ENCODE measurements at regions of chr17 and their contacts with region 1.

Region 1: DNA sequence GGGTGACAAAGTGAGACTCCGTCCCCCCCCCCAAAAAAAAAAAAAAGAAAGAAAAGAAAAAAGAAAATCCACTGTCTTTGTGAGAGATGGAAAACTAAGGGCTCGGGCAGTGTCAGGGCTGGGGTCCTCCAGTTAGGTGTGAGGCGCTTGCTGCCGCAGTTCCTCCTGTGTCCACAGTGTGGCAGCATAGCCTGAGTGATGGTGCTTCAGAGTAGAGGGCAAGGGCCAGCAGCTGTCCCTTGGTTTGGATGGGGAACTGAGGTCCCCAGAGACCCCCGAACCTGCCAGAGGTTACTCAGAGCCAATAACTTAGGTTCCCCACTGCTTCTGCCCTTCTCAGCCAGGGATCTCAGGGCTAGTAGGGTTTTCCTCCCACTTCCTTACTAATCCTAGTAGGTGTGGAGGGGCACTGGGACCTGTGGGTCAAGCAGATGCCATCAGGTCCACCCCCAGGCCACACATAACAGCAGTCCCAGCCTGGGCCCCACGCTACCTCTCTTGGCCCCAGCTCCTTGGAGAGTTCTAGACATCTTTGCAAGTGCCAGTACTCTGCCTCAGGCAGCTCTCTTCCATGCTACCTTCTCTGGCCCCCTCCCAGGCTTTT is 7.9 kb upstream of the LLGL1 start:
- DNase-seq: peak in 1 of 2 experiments; percentile 96
- H3K4me3 ChIP-seq: no peak overlapping the region
- H3K27ac ChIP-seq: no peak overlapping the region
- H3K4me1 ChIP-seq: no peaks in the 10 kb centered on the region; a peak in 3 of 7 replicates
- H3K27me3 ChIP-seq: no peaks in the 10 kb centered on the region
- CTCF ChIP-seq: peak; percentile 92 to 99 (median 98)
- EP300 ChIP-seq: no peak
- POLR2A ChIP-seq: no peak
- RAD21 ChIP-seq: peak; percentile 94 to 95

Region 2: GRCh38 chr17:18161207-18162145 is 56.0 kb before region 1 on chr17:
- CTCF ChIA-PET with region 1: no interaction called
- POLR2A ChIA-PET with region 1: no interaction called
- DNase-seq: no peak
- H3K4me3 ChIP-seq: no peak overlapping the region
- H3K27ac ChIP-seq: no peak overlapping the region
- H3K4me1 ChIP-seq: peaks cover 2 to 5% (median 3%) of the 10 kb centered on the region in 4 experiments; a peak in 6 of 7 replicates
- H3K27me3 ChIP-seq: no peaks in the 10 kb centered on the region; a peak in 1 of 7 replicates
- CTCF ChIP-seq: no peak
- EP300 ChIP-seq: no peak
- POLR2A ChIP-seq: no peak
- RAD21 ChIP-seq: no peak

Region 3: DNA sequence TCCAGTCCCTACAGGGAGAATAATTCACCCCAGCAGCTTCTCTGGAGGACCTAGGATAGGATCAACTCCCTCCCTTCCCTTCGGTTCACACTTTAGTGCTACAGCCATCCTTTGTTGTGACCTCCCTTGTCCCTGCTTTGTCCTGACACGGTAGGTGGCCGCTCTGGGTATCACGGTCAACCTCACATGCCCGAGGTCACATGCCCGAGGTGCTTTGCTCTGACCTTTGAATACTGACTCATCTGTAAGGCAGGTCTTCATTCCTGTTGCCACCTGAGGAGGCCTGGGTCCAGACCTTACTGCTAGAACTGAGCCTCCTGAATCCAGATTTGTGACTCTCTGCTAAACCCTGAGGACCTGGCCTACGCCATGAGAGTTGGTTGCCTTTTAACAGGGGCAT is 14.2 kb before region 1 on chr17:
- CTCF ChIA-PET with region 1: interaction called, 30 read pairs
- POLR2A ChIA-PET with region 1: no interaction called
- DNase-seq: no peak
- H3K4me3 ChIP-seq: no peak overlapping the region
- H3K27ac ChIP-seq: 0 out of 2 replicates have a peak overlapping the region, but pooled peaks have one; percentile 32
- H3K4me1 ChIP-seq: peaks cover 0 to 8% (median 5%) of the 10 kb centered on the region in 4 experiments; a peak in 5 of 7 replicates
- H3K27me3 ChIP-seq: no peaks in the 10 kb centered on the region
- CTCF ChIP-seq: no peak
- EP300 ChIP-seq: no peak
- POLR2A ChIP-seq: no peak
- RAD21 ChIP-seq: no peak

Measured in H1 (cell line).